OCI-LY7 (cell line): ENCODE measurements at regions of chr2 and their contacts with region 1.

Region 1: DNA sequence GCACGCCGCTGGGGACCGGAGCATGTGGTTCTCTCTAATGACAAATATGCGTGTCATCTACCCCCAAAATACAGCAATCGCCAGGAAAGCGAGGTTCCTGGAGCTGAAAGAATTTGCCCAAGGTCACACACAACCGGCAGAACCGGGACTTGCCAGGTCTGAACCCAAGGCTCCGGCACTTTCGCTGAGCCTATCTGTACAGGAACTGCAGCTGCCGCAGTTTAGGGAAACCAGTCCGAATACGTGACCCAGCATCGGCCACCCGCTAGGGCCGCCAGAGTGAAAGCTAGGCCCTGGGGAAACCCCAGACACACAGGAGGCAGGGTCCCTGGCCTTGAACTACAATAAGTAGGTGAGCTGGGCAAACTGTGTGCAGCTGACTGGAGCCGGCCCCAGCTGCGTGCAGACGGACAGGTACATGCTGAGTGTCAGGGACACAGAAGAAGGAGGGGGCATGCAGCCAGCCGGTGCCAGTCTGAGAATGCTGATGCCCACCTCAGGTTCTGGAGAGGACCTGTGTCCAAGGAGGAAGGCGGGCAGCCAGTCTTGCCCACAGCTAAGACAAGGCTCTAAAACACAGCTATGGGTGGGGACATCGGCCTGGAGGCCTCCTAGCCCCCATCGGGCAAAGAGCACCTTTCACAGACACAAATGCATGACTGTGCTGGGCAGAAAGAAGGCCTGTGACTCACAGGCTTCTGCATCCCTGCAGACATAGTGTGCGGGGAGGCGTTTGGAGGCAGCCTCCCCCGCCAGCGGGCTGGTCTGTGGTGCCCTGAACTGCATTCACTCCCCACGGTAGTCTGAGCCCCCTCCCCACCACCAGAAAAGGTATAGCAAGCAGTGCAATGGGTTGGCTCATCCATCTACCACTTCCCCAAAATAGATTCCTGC is 107.5 kb upstream of the ID2 start:
- DNase-seq: peak; percentile 96
- H3K4me3 ChIP-seq: peak overlapping the region; percentile 75
- H3K27ac ChIP-seq: peak overlapping the region; percentile 98
- H3K4me1 ChIP-seq: peaks cover 95% of the 10 kb centered on the region
- CTCF ChIP-seq: 0 out of 2 replicates have a peak, but pooled peaks have one; percentile 20

Region 2: GRCh38 chr2:7057865-7058400 is 1516.5 kb before region 1 on chr2:
- CTCF ChIA-PET with region 1: no interaction called
- POLR2A ChIA-PET with region 1: no interaction called
- intact Hi-C with region 1: loop called (anchors 10 kb)
- DNase-seq: peak; percentile 74
- H3K4me3 ChIP-seq: peak overlapping the region; percentile 57
- H3K27ac ChIP-seq: peak overlapping the region; percentile 94
- H3K4me1 ChIP-seq: peaks cover 84% of the 10 kb centered on the region
- CTCF ChIP-seq: no peak

Region 3: GRCh38 chr2:8303322-8303832 is 271.0 kb before region 1 on chr2:
- CTCF ChIA-PET with region 1: interaction called, 4 read pairs
- POLR2A ChIA-PET with region 1: no interaction called
- intact Hi-C with region 1: loop called (anchors 2 kb)
- DNase-seq: peak; percentile 96
- H3K4me3 ChIP-seq: peak overlapping the region; percentile 36
- H3K27ac ChIP-seq: peak overlapping the region; percentile 76
- H3K4me1 ChIP-seq: peaks cover 71% of the 10 kb centered on the region
- CTCF ChIP-seq: peak; percentile 70

Region 4: GRCh38 chr2:8525582-8526402 is 48.6 kb before region 1 on chr2:
- CTCF ChIA-PET with region 1: interaction called, 13 read pairs
- POLR2A ChIA-PET with region 1: interaction called, 107 read pairs
- intact Hi-C with region 1: loop called (anchors 1 kb)
- DNase-seq: peak; percentile 82
- H3K4me3 ChIP-seq: peak overlapping the region; percentile 37
- H3K27ac ChIP-seq: peak overlapping the region; percentile 95
- H3K4me1 ChIP-seq: peaks cover 100% of the 10 kb centered on the region
- CTCF ChIP-seq: peak; percentile 60

Region 5: DNA sequence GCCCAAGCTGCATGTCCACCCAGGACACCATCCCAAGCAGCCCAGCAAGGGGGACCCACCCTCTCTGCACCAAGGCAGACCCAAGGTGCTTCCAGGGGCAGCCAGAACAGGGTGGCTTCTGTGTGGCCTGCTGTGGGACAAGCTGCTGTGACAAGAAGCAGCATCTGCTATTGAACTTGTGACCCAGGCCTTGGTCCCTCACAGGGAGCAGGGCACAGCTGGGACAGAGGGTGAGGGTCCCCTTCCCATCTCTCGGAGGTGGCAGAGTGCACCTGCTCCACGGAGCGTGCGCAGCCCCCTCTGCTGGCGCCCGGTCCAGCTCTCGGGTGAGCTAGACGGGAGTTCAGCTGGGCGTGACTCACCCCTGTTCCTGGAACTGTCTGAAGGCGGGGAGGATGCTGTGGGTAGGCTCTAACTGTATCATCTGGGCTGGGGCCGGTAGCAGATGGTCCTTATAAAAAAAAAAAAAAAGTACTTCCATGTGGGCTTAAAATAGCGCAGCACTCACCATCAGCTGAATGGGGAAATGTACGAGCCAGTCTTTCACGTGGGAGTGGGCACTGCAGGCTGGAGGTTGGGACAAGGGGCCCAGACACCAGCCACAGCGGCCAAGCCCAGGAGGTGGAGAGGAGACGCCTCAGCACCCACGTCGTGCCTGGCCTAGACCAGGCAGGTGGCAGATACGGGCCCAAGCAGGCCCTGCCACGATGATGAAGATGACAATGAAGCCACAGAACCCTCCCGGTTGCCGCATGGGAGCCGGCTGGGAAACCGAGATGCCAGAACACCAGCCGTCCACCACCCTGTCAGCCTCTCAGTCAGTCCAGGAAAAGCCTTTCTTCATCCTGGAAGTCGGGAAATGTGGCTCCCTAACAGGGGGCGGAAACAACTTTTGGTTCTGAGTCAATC is 29.4 kb before region 1 on chr2:
- CTCF ChIA-PET with region 1: interaction called, 16 read pairs
- POLR2A ChIA-PET with region 1: interaction called, 168 read pairs
- intact Hi-C with region 1: loop called (anchors 2 kb)
- DNase-seq: peak; percentile 95
- H3K4me3 ChIP-seq: peak overlapping the region; percentile 40
- H3K27ac ChIP-seq: peak overlapping the region; percentile 98
- H3K4me1 ChIP-seq: peaks cover 100% of the 10 kb centered on the region
- CTCF ChIP-seq: peak; percentile 81

Region 6: GRCh38 chr2:8628230-8629209 is 54.1 kb after region 1 on chr2:
- CTCF ChIA-PET with region 1: interaction called, 4 read pairs
- POLR2A ChIA-PET with region 1: interaction called, 12 read pairs
- intact Hi-C with region 1: no loop called
- DNase-seq: peak; percentile 78
- H3K4me3 ChIP-seq: peak overlapping the region; percentile 70
- H3K27ac ChIP-seq: peak overlapping the region; percentile 82
- H3K4me1 ChIP-seq: peaks cover 69% of the 10 kb centered on the region
- CTCF ChIP-seq: peak; percentile 81

Region 7: DNA sequence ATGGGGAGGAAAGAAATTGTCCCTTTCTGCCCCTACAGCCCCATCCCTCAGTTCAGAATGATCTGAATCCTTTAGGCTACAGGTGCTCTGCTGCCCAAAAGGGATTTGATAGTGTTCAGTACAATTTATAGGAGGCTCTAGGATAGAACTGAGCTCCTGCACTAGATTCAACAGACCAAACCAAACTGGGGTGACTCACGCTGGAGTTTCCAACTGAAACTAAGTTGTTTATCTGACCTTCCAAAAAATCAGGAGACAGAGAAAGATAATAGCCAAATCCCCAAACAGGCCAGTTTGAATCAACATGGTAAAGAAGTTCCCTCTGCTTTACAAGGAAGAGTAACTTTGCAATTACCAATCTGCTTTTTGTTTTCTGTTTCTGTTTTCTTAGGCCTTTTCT is 501.8 kb after region 1 on chr2:
- CTCF ChIA-PET with region 1: no interaction called
- POLR2A ChIA-PET with region 1: no interaction called
- intact Hi-C with region 1: no loop called
- DNase-seq: no peak
- H3K4me3 ChIP-seq: no peak overlapping the region
- H3K27ac ChIP-seq: no peak overlapping the region
- H3K4me1 ChIP-seq: no peaks in the 10 kb centered on the region
- CTCF ChIP-seq: no peak